ENCODE measurements at regions of chr12 and their contacts with region 1.

Region 1: GRCh38 chr12:104695453-104696148 is 238.9 kb downstream of the CHST11 start:
- DNase-seq: peak; percentile 49
- ATAC-seq: peak; percentile 71
- H3K4me3 Mint-ChIP-seq: peak overlapping the region; percentile 57
- H3K27ac Mint-ChIP-seq: peak overlapping the region; percentile 81
- H3K4me1 Mint-ChIP-seq: peaks cover 84% of the 10 kb centered on the region
- H3K27me3 Mint-ChIP-seq: no peaks in the 10 kb centered on the region
- CTCF ChIP-seq: no peak

Region 2: GRCh38 chr12:104671407-104672098 is 24.0 kb before region 1 on chr12:
- CTCF ChIA-PET with region 1: no interaction called
- POLR2A ChIA-PET with region 1: interaction called, 19 read pairs
- intact Hi-C with region 1: loop called (anchors 1 kb)
- DNase-seq: peak; percentile 53
- ATAC-seq: peak; percentile 82
- H3K4me3 Mint-ChIP-seq: peak overlapping the region; percentile 71
- H3K27ac Mint-ChIP-seq: peak overlapping the region; percentile 92
- H3K4me1 Mint-ChIP-seq: peaks cover 80% of the 10 kb centered on the region
- H3K27me3 Mint-ChIP-seq: no peaks in the 10 kb centered on the region
- CTCF ChIP-seq: no peak

Region 3: GRCh38 chr12:104720339-104721038 is 24.9 kb after region 1 on chr12:
- CTCF ChIA-PET with region 1: no interaction called
- POLR2A ChIA-PET with region 1: interaction called, 10 read pairs
- intact Hi-C with region 1: loop called (anchors 2 kb)
- DNase-seq: peak; percentile 27
- ATAC-seq: peak; percentile 57
- H3K4me3 Mint-ChIP-seq: peak overlapping the region; percentile 75
- H3K27ac Mint-ChIP-seq: peak overlapping the region; percentile 77
- H3K4me1 Mint-ChIP-seq: peaks cover 62% of the 10 kb centered on the region
- H3K27me3 Mint-ChIP-seq: no peaks in the 10 kb centered on the region
- CTCF ChIP-seq: no peak

Region 4: GRCh38 chr12:104740668-104741067 is 45.1 kb after region 1 on chr12:
- CTCF ChIA-PET with region 1: no interaction called
- POLR2A ChIA-PET with region 1: interaction called, 3 read pairs
- intact Hi-C with region 1: loop called (anchors 5 kb)
- DNase-seq: peak; percentile 30
- ATAC-seq: peak; percentile 90
- H3K4me3 Mint-ChIP-seq: peak overlapping the region; percentile 72
- H3K27ac Mint-ChIP-seq: peak overlapping the region; percentile 93
- H3K4me1 Mint-ChIP-seq: peaks cover 97% of the 10 kb centered on the region
- H3K27me3 Mint-ChIP-seq: no peaks in the 10 kb centered on the region
- CTCF ChIP-seq: no peak

Region 5: GRCh38 chr12:104750061-104750460 is 54.5 kb after region 1 on chr12:
- CTCF ChIA-PET with region 1: interaction called, 3 read pairs
- POLR2A ChIA-PET with region 1: interaction called, 4 read pairs
- intact Hi-C with region 1: loop called (anchors 2 kb)
- DNase-seq: no peak
- ATAC-seq: peak; percentile 51
- H3K4me3 Mint-ChIP-seq: no peak overlapping the region
- H3K27ac Mint-ChIP-seq: peak overlapping the region; percentile 50
- H3K4me1 Mint-ChIP-seq: peaks cover 66% of the 10 kb centered on the region
- H3K27me3 Mint-ChIP-seq: no peaks in the 10 kb centered on the region
- CTCF ChIP-seq: no peak